Psoas muscle (tissue), 8 donors: ENCODE measurements at regions of chr2 and their contacts with region 1.

Region 1: GRCh38 chr2:78861546-78861945 is 164.0 kb upstream of the REG3G start:
- DNase-seq: no peak
- ATAC-seq: peak in 1 of 4 donors; percentile 77
- H3K4me3 ChIP-seq: no peak overlapping the region
- H3K27ac ChIP-seq: no peak overlapping the region
- H3K4me1 ChIP-seq: no peaks in the 10 kb centered on the region
- H3K27me3 ChIP-seq: no peaks in the 10 kb centered on the region
- CTCF ChIP-seq: peak; percentile 46

Region 2: DNA sequence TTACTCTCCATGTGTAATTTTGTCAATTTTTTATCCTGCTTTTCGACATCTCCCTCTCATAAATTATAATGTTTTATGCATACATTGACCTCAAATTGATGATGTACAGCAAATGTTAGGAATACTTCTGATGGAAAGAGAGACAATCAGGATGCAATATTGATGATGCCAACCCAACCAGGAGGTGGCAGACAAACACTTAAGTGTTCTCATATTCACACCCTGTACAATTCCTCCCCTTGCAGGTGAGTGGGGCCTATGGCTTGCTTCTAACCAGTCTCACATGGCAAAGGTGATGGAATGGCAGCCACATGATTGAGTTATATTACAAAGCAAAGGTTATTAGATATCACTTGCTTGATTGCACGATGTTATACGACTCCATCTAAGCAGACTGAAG is 430.3 kb before region 1 on chr2:
- intact Hi-C with region 1: loop called in 1 of 2 experiments (anchors 5 kb)
- DNase-seq: no peak
- ATAC-seq: peak in 1 of 4 donors; percentile 70
- H3K4me3 ChIP-seq: no peak overlapping the region
- H3K27ac ChIP-seq: no peak overlapping the region
- H3K4me1 ChIP-seq: no peaks in the 10 kb centered on the region
- H3K27me3 ChIP-seq: no peaks in the 10 kb centered on the region
- CTCF ChIP-seq: peak; percentile 27

Region 3: GRCh38 chr2:78739282-78739681 is 122.3 kb before region 1 on chr2:
- intact Hi-C with region 1: no loop called
- DNase-seq: no peak
- ATAC-seq: no peak
- H3K4me3 ChIP-seq: no peak overlapping the region
- H3K27ac ChIP-seq: no peak overlapping the region
- H3K4me1 ChIP-seq: no peaks in the 10 kb centered on the region
- H3K27me3 ChIP-seq: no peaks in the 10 kb centered on the region
- CTCF ChIP-seq: no peak